ENCODE measurements at regions of chr11 and their contacts with region 1.

Region 1: GRCh38 chr11:48123934-48124755 is 92.5 kb upstream of the OR4B1 start:
- DNase-seq: no peak
- ATAC-seq: no peak
- H3K4me3 ChIP-seq: no peak overlapping the region
- H3K27ac ChIP-seq: no peak overlapping the region
- H3K4me1 ChIP-seq: peaks cover 10% of the 10 kb centered on the region
- H3K27me3 ChIP-seq: no peaks in the 10 kb centered on the region; a peak in 2 of 4 replicates
- CTCF ChIP-seq: no peak
- EP300 ChIP-seq: no peak
- POLR2A ChIP-seq: no peak
- RAD21 ChIP-seq: no peak

Region 2: DNA sequence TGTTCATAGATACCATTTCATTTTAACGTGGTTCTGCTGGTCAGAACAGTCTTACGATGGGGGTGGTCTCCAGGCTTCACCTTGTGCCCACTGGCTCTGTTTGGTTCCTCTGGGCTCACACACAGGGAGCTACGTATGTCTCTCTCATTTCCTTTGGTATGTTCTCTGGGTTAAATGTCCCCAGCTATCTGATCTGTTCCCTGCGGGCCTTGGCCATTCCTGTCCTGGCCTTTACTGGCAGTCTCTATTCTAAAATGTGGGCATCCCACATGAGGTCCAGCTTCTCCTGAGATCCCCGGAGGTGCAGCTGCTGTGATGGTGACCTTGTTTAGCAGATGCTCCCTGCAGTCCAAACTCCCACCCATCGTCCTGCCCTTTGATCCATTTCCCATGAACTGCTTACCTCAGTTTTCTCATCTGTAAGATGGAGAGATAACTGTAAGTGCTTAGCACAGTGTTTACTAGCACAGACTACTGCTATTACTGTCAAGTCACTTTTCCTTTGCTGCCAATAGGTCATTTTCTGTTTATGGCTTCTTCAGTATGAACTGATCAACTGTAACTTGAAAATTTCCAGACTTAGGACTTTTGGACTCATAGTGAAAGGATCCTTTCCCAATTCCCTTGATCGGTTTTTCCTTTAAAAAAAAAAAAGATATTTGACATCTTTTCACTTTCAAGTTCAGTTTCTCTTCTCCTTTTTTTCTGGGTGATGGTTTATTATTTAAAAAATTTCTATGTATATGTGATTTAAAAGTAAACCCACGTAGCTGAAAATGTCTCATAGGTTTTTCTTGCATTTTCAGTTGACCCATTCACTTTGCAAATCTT is 50.9 kb before region 1 on chr11:
- CTCF ChIA-PET with region 1: no interaction called
- POLR2A ChIA-PET with region 1: no interaction called
- RAD21 ChIA-PET with region 1: no interaction called
- SMC1A ChIA-PET with region 1: no interaction called
- in situ Hi-C with region 1: loop called (anchors 5 kb)
- intact Hi-C with region 1: no loop called
- DNase-seq: no peak
- ATAC-seq: peak; percentile 38; the same call in 2 of the 3 replicates
- H3K4me3 ChIP-seq: no peak overlapping the region
- H3K27ac ChIP-seq: peak overlapping the region; percentile 14
- H3K4me1 ChIP-seq: peaks cover 25% of the 10 kb centered on the region
- H3K27me3 ChIP-seq: no peaks in the 10 kb centered on the region
- CTCF ChIP-seq: no peak
- EP300 ChIP-seq: no peak
- POLR2A ChIP-seq: no peak
- RAD21 ChIP-seq: no peak

Region 3: GRCh38 chr11:48087974-48088681 is 36.0 kb before region 1 on chr11:
- CTCF ChIA-PET with region 1: no interaction called
- POLR2A ChIA-PET with region 1: no interaction called
- RAD21 ChIA-PET with region 1: no interaction called
- SMC1A ChIA-PET with region 1: no interaction called
- in situ Hi-C with region 1: no loop called
- intact Hi-C with region 1: no loop called
- DNase-seq: no peak
- ATAC-seq: no peak; the same call in 1 of the 3 replicates
- H3K4me3 ChIP-seq: no peak overlapping the region
- H3K27ac ChIP-seq: no peak overlapping the region
- H3K4me1 ChIP-seq: peaks cover 12% of the 10 kb centered on the region
- H3K27me3 ChIP-seq: no peaks in the 10 kb centered on the region
- CTCF ChIP-seq: no peak
- EP300 ChIP-seq: no peak
- POLR2A ChIP-seq: no peak
- RAD21 ChIP-seq: no peak

Region 4: GRCh38 chr11:48172818-48173609 is 48.9 kb after region 1 on chr11:
- CTCF ChIA-PET with region 1: no interaction called
- POLR2A ChIA-PET with region 1: no interaction called
- RAD21 ChIA-PET with region 1: no interaction called
- SMC1A ChIA-PET with region 1: no interaction called
- in situ Hi-C with region 1: no loop called
- intact Hi-C with region 1: no loop called
- DNase-seq: no peak
- ATAC-seq: peak; percentile 96
- H3K4me3 ChIP-seq: no peak overlapping the region
- H3K27ac ChIP-seq: no peak overlapping the region
- H3K4me1 ChIP-seq: peaks cover 4% of the 10 kb centered on the region; the same call in 1 of the 2 replicates
- H3K27me3 ChIP-seq: no peaks in the 10 kb centered on the region
- CTCF ChIP-seq: peak; percentile 83 to 99 (median 96)
- EP300 ChIP-seq: no peak
- POLR2A ChIP-seq: no peak
- RAD21 ChIP-seq: peak; percentile 89

Region 5: GRCh38 chr11:48248902-48249301 is 124.8 kb after region 1 on chr11:
- CTCF ChIA-PET with region 1: no interaction called
- POLR2A ChIA-PET with region 1: no interaction called
- RAD21 ChIA-PET with region 1: no interaction called
- SMC1A ChIA-PET with region 1: no interaction called
- in situ Hi-C with region 1: no loop called
- intact Hi-C with region 1: no loop called
- DNase-seq: no peak
- ATAC-seq: no peak
- H3K4me3 ChIP-seq: no peak overlapping the region
- H3K27ac ChIP-seq: no peak overlapping the region
- H3K4me1 ChIP-seq: no peaks in the 10 kb centered on the region
- H3K27me3 ChIP-seq: no peaks in the 10 kb centered on the region
- CTCF ChIP-seq: no peak
- EP300 ChIP-seq: no peak
- POLR2A ChIP-seq: no peak
- RAD21 ChIP-seq: no peak